Heart left ventricle (tissue), 16 donors: ENCODE measurements at regions of chr3 and their contacts with region 1.

Region 1: DNA sequence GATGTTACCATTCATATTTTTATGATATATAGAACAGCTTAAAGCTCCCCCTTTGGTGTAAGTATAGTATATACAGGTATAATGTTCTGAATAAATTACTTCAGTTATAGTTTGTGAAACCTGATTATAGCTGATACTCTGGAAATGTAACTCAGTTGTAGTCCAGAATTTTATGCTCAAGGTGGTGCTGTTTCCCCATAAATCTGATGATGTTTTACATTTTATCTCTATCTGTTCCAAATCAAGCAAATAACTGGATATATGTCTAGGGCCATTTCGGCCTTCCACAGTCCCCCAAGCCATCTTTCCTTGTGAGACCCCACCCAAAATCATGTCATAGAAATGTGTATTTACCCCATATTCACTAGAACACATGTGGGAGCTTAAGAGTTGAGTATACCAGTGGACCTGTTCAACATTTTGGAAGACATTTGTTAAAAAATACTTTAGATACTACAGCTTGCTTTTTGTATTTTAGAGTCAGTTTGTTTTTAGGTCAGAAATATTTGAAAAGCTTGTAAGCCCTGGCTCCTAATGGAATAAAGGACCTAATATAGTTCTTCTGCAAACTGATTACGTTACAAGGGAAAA is 107.1 kb downstream of the ATG7 start:
- DNase-seq: no peak
- ATAC-seq: peak; percentile 26 to 72 (median 62)
- H3K4me3 ChIP-seq: no peak overlapping the region
- H3K27ac ChIP-seq: peak overlapping the region in 1 of 12 donors; percentile 15
- H3K4me1 ChIP-seq: peaks cover 0 to 18% (median 2%) of the 10 kb centered on the region in 12 donors
- H3K27me3 ChIP-seq: no peaks in the 10 kb centered on the region
- CTCF ChIP-seq: peak; percentile 36 to 82 (median 67)
- POLR2A ChIP-seq: no peak

Region 2: GRCh38 chr3:11803977-11804892 is 424.9 kb after region 1 on chr3:
- intact Hi-C with region 1: loop called (anchors 2 to 5 kb)
- DNase-seq: peak in 3 of 5 donors; percentile 24 to 53 (median 25)
- ATAC-seq: peak in 3 of 4 donors; percentile 69 to 74 (median 72)
- H3K4me3 ChIP-seq: no peak overlapping the region
- H3K27ac ChIP-seq: no peak overlapping the region
- H3K4me1 ChIP-seq: no peaks in the 10 kb centered on the region
- H3K27me3 ChIP-seq: no peaks in the 10 kb centered on the region
- CTCF ChIP-seq: peak; percentile 62 to 81 (median 71)
- POLR2A ChIP-seq: no peak

Region 3: GRCh38 chr3:12175844-12176453 is 796.6 kb after region 1 on chr3:
- intact Hi-C with region 1: loop called in 1 of 10 experiments (anchors 10 kb)
- DNase-seq: peak; percentile 56 to 74 (median 70)
- ATAC-seq: peak; percentile 82 to 90 (median 84)
- H3K4me3 ChIP-seq: no peak overlapping the region
- H3K27ac ChIP-seq: no peak overlapping the region
- H3K4me1 ChIP-seq: peaks cover 9 to 55% (median 29%) of the 10 kb centered on the region in 12 donors
- H3K27me3 ChIP-seq: no peaks in the 10 kb centered on the region
- CTCF ChIP-seq: peak; percentile 77 to 93 (median 88)
- POLR2A ChIP-seq: no peak